ENCODE measurements at regions of chr10 and their contacts with region 1.

Region 1: DNA sequence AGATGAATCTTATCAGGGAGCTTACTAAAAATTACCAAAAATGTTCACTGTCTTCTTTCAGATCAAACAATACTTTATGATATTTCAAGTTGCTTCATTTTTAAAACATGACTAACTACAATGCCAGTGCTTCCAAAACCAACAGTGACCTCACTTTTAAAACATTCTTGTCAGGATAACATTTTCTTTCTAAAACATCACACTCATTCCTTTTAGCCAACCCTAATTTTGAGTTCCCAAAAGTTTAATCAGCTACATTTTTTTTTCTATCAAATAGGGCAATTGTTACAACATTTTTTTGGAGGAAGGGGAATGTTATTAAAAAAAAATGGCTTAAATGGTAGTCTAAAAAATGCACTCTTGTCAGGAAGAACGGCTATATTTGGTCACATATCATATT is 37.3 kb downstream of the RTKN2 start:
- DNase-seq: peak; percentile 99
- ATAC-seq: peak; percentile 76
- H3K4me3 ChIP-seq: peak overlapping the region; percentile 25
- H3K27ac ChIP-seq: peak overlapping the region; percentile 73
- H3K4me1 ChIP-seq: peaks cover 55% of the 10 kb centered on the region
- H3K27me3 ChIP-seq: no peaks in the 10 kb centered on the region
- CTCF ChIP-seq: no peak

Region 2: DNA sequence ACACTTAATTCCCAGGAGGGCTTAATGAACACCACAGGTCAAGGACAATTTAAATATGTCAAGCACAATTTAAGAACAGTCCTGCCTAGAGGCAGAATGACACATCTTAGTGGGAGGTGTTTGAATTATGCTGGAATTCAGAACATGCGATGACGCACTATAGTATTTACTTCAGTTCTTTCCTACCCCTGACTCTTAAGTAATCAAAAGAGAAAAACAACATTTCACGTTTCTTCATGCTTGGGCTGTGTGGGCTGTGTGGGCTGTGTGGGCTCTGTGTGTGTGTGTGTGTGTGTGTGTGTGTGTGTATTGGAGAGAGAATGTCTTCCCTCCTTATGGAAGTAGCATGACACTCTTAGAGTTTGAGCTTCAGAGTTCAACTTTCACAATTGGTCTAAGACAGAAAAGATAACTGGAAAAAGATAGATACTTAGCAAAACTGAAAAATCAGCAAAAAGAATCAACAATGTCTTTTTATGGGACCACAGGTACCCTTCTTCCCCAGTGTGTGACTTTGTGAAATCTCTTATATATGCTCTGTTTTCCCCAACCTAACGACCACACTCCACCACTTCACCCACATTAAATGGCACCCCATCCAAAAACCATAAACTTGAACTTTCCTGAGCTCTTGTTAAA is 602.4 kb before region 1 on chr10:
- CTCF ChIA-PET with region 1: no interaction called
- POLR2A ChIA-PET with region 1: no interaction called
- intact Hi-C with region 1: loop called (anchors 10 kb)
- DNase-seq: peak; percentile 100
- ATAC-seq: peak; percentile 93
- H3K4me3 ChIP-seq: no peak overlapping the region
- H3K27ac ChIP-seq: peak overlapping the region; percentile 1; the same call in 1 of the 2 replicates
- H3K4me1 ChIP-seq: peaks cover 31% of the 10 kb centered on the region
- H3K27me3 ChIP-seq: no peaks in the 10 kb centered on the region
- CTCF ChIP-seq: no peak

Region 3: DNA sequence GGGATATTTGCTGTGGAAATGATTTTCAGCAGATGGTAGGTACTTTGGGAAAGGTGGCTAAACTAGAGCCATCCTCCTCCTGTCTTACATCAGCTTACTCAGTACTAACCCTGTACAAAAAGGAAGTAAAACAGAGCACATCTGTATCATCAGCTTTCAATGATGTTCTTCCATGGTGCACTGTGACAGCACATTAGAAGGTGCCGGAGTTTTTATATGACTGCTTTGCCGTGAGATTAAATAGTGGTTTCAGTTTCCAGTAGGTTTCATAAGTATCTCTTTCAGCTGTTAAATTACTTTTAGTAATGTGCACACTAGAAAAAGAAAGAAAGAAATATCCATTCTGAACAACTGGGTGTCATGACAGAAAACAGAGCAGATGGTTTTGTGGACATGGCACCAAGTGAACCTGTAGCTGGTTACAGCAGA is 243.4 kb before region 1 on chr10:
- CTCF ChIA-PET with region 1: no interaction called
- POLR2A ChIA-PET with region 1: no interaction called
- intact Hi-C with region 1: no loop called
- DNase-seq: no peak
- ATAC-seq: peak; percentile 27; the same call in 1 of the 2 replicates
- H3K4me3 ChIP-seq: no peak overlapping the region
- H3K27ac ChIP-seq: no peak overlapping the region
- H3K4me1 ChIP-seq: no peaks in the 10 kb centered on the region
- H3K27me3 ChIP-seq: no peaks in the 10 kb centered on the region
- CTCF ChIP-seq: no peak

Region 4: DNA sequence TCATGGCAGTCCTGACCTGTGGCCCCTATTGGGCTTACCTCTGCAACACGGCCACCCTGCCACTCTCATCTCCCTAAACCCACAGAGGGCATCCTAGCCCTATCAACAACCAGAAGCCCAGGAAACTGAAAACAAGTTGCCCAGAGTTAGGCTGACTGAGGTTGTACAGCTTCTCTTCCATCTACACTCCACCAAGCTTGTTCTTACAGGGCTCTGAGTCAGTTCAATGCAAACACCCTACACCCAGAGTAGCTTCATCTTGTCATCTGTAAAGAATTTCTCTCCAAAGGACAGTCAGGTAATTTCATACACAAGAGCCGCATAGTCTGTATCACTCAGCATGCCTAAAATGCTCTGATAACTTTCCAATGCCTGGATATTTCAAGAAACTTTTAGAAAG is 154.5 kb before region 1 on chr10:
- CTCF ChIA-PET with region 1: no interaction called
- POLR2A ChIA-PET with region 1: interaction called, 3 read pairs
- intact Hi-C with region 1: loop called (anchors 1 kb)
- DNase-seq: peak; percentile 100
- ATAC-seq: peak; percentile 99
- H3K4me3 ChIP-seq: peak overlapping the region; percentile 31
- H3K27ac ChIP-seq: peak overlapping the region; percentile 61
- H3K4me1 ChIP-seq: peaks cover 45% of the 10 kb centered on the region
- H3K27me3 ChIP-seq: no peaks in the 10 kb centered on the region
- CTCF ChIP-seq: peak; percentile 95

Region 5: GRCh38 chr10:62112271-62112769 is 119.1 kb before region 1 on chr10:
- CTCF ChIA-PET with region 1: no interaction called
- POLR2A ChIA-PET with region 1: no interaction called
- intact Hi-C with region 1: loop called (anchors 1 kb)
- DNase-seq: peak; percentile 100
- ATAC-seq: peak; percentile 83
- H3K4me3 ChIP-seq: no peak overlapping the region
- H3K27ac ChIP-seq: peak overlapping the region; percentile 62
- H3K4me1 ChIP-seq: peaks cover 74% of the 10 kb centered on the region
- H3K27me3 ChIP-seq: no peaks in the 10 kb centered on the region
- CTCF ChIP-seq: no peak

Region 6: DNA sequence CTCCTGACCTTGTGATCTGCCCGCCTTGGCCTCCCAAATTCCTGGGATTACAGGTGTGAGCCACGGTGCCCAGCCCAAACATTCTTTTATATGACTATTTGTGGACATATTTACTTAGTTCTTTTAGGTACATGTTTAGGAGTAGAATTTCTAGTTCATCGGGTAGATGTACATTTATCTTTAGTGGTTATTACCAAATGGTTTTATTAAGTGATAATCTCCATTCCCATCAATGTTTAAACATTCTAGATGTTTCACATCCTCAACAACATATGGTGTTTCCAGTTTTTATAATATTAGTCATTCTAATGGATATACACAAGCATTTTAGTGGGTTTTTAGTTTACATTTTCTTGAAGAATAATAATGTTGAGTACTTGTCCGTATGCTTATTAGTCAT is 94.5 kb before region 1 on chr10:
- CTCF ChIA-PET with region 1: no interaction called
- POLR2A ChIA-PET with region 1: no interaction called
- intact Hi-C with region 1: loop called (anchors 1 kb)
- DNase-seq: peak; percentile 100
- ATAC-seq: peak; percentile 85
- H3K4me3 ChIP-seq: no peak overlapping the region
- H3K27ac ChIP-seq: peak overlapping the region; percentile 76
- H3K4me1 ChIP-seq: peaks cover 25% of the 10 kb centered on the region
- H3K27me3 ChIP-seq: no peaks in the 10 kb centered on the region
- CTCF ChIP-seq: no peak

Region 7: GRCh38 chr10:62214364-62214874 is 17.0 kb before region 1 on chr10:
- CTCF ChIA-PET with region 1: no interaction called
- POLR2A ChIA-PET with region 1: no interaction called
- intact Hi-C with region 1: loop called (anchors 1 kb)
- DNase-seq: no peak
- ATAC-seq: peak; percentile 91
- H3K4me3 ChIP-seq: no peak overlapping the region
- H3K27ac ChIP-seq: no peak overlapping the region
- H3K4me1 ChIP-seq: no peaks in the 10 kb centered on the region
- H3K27me3 ChIP-seq: no peaks in the 10 kb centered on the region
- CTCF ChIP-seq: no peak

Measured in PC-3 (cell line).